ENCODE measurements at regions of chr17 and their contacts with region 1.

Region 1: GRCh38 chr17:19410875-19411620 is at the start of gene RNF112:
- DNase-seq: peak; percentile 92
- H3K4me3 ChIP-seq: peak within 1 kb of the TSS; percentile 50 to 78
- H3K27ac ChIP-seq: peak within 1 kb of the TSS; percentile 53 to 86; a peak in 3 of 4 replicates
- H3K4me1 ChIP-seq: peaks cover 17 to 40% of the 10 kb centered on the region in 2 experiments; a peak in 3 of 4 replicates
- H3K27me3 ChIP-seq: no peaks in the 10 kb centered on the region
- CTCF ChIP-seq: peak; percentile 47
- EP300 ChIP-seq: no peak
- RAD21 ChIP-seq: peak; percentile 70
- polyA plus RNA-seq, gene RNF112: 22.6 and 26.9 TPM in 2 replicates

Region 2: GRCh38 chr17:19377602-19378392 is 33.3 kb before region 1 on chr17:
- CTCF ChIA-PET with region 1: interaction called, 4 read pairs
- POLR2A ChIA-PET with region 1: interaction called, 22 read pairs
- DNase-seq: peak; percentile 98
- H3K4me3 ChIP-seq: peak overlapping the region; percentile 87 to 88
- H3K27ac ChIP-seq: peak overlapping the region; percentile 94 to 95
- H3K4me1 ChIP-seq: peaks cover 0 to 25% of the 10 kb centered on the region in 2 experiments; a peak in 3 of 4 replicates
- H3K27me3 ChIP-seq: no peaks in the 10 kb centered on the region
- CTCF ChIP-seq: 0 out of 2 replicates have a peak, but pooled peaks have one; percentile 9
- EP300 ChIP-seq: no peak; a peak in 1 of 4 replicates
- RAD21 ChIP-seq: no peak; the same call in 1 of the 2 replicates